Activated B cell treated with CpG ODN at 0.5 μM for 24 hours (primary cell): ENCODE measurements at regions of chr15 and their contacts with region 1.

Region 1: DNA sequence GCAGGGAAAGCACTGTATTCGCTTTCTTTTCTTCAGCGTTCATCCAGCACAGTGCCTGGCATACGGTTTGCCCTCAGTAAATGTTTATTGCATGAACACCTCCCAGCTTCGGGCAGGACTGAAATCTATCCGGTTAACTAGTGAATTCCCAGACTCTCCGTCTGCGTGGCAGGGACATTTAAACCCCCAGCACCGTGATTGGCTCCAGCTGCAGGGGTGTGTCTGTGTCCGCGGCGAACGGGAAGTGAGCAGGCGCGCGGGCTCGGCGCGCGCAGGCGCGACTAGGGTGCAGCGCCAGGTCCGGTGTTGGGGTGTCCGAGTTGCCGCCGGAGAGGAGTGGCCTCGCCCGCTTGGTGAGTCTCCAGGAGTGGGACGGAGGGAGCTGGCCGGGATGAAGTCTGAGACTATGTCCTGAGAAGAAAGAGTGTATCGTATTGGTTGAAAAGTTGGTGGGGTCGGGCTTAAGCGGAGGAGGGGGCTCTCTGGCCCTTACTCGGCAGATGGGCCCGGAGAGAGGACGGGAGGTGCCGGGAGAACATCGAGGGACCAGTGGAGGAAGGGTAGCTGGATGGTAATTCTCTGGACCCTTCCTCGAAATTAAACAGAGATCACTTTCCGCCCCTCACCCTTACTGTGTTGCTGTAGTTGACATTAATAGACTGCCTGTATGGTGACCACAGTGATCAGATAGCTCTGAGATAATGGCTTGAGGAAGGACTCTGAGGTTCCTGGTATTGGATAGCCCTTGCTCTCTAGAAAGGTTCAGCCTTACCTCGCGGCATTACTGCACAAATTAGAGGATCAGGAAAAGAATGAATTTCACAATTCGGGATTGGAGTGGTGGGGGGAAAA is at the start of gene SNAP23:
- DNase-seq: peak; percentile 78
- ATAC-seq: peak; percentile 86
- H3K4me3 Mint-ChIP-seq: peak within 1 kb of the TSS; percentile 100
- H3K27ac Mint-ChIP-seq: peak within 1 kb of the TSS; percentile 97
- H3K4me1 Mint-ChIP-seq: peaks cover 83% of the 10 kb centered on the region
- H3K27me3 Mint-ChIP-seq: no peaks in the 10 kb centered on the region
- CTCF ChIP-seq: no peak
- total RNA-seq, gene SNAP23: 111 and 123 TPM in 2 replicates

Region 2: GRCh38 chr15:41972253-41973242 is 523.0 kb before region 1 on chr15 and contains the start of gene EHD4:
- CTCF ChIA-PET with region 1: no interaction called
- POLR2A ChIA-PET with region 1: no interaction called
- intact Hi-C with region 1: loop called (anchors 5 kb)
- DNase-seq: peak; percentile 88
- ATAC-seq: peak; percentile 84
- H3K4me3 Mint-ChIP-seq: peak within 1 kb of the TSS; percentile 93
- H3K27ac Mint-ChIP-seq: peak within 1 kb of the TSS; percentile 90
- H3K4me1 Mint-ChIP-seq: peaks cover 46% of the 10 kb centered on the region
- H3K27me3 Mint-ChIP-seq: peaks cover 7% of the 10 kb centered on the region
- CTCF ChIP-seq: no peak
- total RNA-seq, gene EHD4: 38.4 and 42.6 TPM in 2 replicates

Region 3: GRCh38 chr15:42444415-42445063 is 51.0 kb before region 1 on chr15:
- CTCF ChIA-PET with region 1: no interaction called
- POLR2A ChIA-PET with region 1: no interaction called
- intact Hi-C with region 1: no loop called
- DNase-seq: no peak
- ATAC-seq: no peak
- H3K4me3 Mint-ChIP-seq: no peak overlapping the region
- H3K27ac Mint-ChIP-seq: no peak overlapping the region
- H3K4me1 Mint-ChIP-seq: no peaks in the 10 kb centered on the region
- H3K27me3 Mint-ChIP-seq: no peaks in the 10 kb centered on the region
- CTCF ChIP-seq: no peak

Region 4: GRCh38 chr15:42474827-42475226 is 20.8 kb before region 1 on chr15:
- CTCF ChIA-PET with region 1: interaction called, 9 read pairs
- POLR2A ChIA-PET with region 1: interaction called, 6 read pairs
- intact Hi-C with region 1: loop called (anchors 2 kb)
- DNase-seq: no peak
- ATAC-seq: no peak
- H3K4me3 Mint-ChIP-seq: no peak overlapping the region
- H3K27ac Mint-ChIP-seq: peak overlapping the region; percentile 59
- H3K4me1 Mint-ChIP-seq: peaks cover 25% of the 10 kb centered on the region
- H3K27me3 Mint-ChIP-seq: no peaks in the 10 kb centered on the region
- CTCF ChIP-seq: no peak

Region 5: DNA sequence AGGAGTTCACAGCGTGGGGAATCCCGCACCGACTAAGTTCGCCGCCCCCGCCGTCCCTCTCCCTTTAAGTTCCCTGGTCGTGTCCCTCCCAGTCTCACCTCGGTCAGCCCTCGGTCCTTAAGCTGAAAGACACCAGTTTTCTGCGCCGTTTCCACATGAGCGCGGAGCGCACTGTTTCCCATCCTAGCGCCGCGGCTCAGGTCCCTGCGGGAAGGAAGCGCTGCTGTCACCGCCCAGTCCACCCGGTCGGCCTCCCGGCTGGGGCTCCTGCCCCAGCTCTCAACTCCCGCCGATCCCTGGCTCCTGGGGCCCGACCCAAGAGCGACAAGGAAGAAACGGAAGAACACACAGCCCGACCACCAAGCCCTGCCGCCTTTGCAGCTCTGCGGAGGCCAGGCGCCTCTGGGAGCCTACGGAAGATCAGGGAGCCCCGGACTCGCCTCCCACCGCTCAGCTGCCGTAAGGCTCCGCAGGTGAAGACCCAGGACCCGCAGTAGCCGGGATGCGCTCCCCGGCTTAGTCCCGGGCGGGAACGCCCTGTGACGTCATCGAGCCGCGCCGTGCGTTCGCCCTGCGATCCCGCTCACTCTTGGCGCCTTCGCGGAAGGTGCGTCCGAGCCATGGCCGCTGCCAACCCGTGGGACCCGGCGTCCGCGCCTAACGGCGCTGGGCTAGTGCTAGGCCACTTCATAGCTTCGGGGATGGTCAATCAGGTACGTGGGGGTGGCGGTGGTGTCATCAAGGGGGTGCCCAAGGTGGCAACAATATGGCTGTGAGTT is 52.9 kb after region 1 on chr15 and contains the starts of genes HAUS2 and LRRC57:
- CTCF ChIA-PET with region 1: no interaction called
- POLR2A ChIA-PET with region 1: interaction called, 16 read pairs
- intact Hi-C with region 1: loop called (anchors 1 kb)
- DNase-seq: peak; percentile 88
- ATAC-seq: peak; percentile 86
- H3K4me3 Mint-ChIP-seq: peak within 1 kb of the TSS; percentile 96
- H3K27ac Mint-ChIP-seq: peak within 1 kb of the TSS; percentile 93
- H3K4me1 Mint-ChIP-seq: peaks cover 36% of the 10 kb centered on the region
- H3K27me3 Mint-ChIP-seq: no peaks in the 10 kb centered on the region
- CTCF ChIP-seq: no peak
- total RNA-seq, gene HAUS2: 18.2 and 20.8 TPM in 2 replicates
- total RNA-seq, gene LRRC57: 16.1 and 21.4 TPM in 2 replicates

Region 6: DNA sequence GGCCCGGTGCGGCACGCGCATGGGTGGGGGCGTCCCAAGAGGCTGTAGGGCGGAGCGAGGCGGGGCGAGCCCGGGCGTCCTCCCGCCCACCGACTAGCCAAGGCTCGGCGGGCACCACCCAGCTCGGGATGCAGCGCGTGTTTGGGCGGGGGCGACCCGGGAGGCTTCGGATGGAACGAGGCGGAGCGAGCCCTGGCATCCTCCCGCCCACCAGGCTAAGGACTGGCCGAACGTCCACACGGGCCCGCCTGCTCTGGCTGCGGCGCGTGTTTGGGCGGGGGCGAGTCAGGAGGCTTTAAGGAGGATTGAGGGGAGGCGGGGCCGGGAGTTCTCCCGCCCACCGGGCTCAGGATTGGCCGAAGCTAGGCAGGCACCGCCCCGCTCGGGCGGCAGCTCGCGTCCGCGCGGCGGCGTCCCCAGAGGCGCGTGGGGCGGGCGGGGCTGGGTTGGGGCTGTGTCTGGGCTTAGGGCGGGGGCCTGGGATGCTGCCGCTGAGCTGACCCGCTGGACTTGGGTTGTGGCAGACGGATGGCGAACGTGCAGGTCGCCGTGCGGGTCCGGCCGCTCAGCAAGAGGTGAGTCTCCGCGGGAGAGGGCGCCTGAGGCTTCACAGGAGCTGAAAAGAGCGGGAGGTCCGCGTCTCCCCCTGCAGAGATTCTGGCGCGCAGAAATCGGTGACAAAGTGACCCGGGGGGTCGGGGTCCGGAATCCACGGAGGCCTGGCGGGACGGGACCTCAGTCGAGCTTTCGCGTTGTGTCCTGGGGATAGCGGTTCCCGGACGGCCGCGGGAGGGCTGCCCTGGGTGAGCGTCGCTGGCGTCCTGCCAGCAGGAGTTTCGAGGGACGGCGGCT is 79.8 kb after region 1 on chr15 and contains the start of gene STARD9:
- CTCF ChIA-PET with region 1: no interaction called
- POLR2A ChIA-PET with region 1: interaction called, 12 read pairs
- intact Hi-C with region 1: loop called (anchors 2 kb)
- DNase-seq: peak; percentile 98
- ATAC-seq: peak; percentile 85
- H3K4me3 Mint-ChIP-seq: peak within 1 kb of the TSS; percentile 96
- H3K27ac Mint-ChIP-seq: peak within 1 kb of the TSS; percentile 83
- H3K4me1 Mint-ChIP-seq: peaks cover 21% of the 10 kb centered on the region
- H3K27me3 Mint-ChIP-seq: no peaks in the 10 kb centered on the region
- CTCF ChIP-seq: no peak
- total RNA-seq, gene STARD9: 5.5 and 7.1 TPM in 2 replicates

Region 7: GRCh38 chr15:42920519-42921227 is 425.1 kb after region 1 on chr15 and contains the start of gene TTBK2:
- CTCF ChIA-PET with region 1: no interaction called
- POLR2A ChIA-PET with region 1: no interaction called
- intact Hi-C with region 1: loop called (anchors 10 kb)
- DNase-seq: peak; percentile 88
- ATAC-seq: peak; percentile 94
- H3K4me3 Mint-ChIP-seq: peak within 1 kb of the TSS; percentile 98
- H3K27ac Mint-ChIP-seq: peak within 1 kb of the TSS; percentile 91
- H3K4me1 Mint-ChIP-seq: peaks cover 34% of the 10 kb centered on the region
- H3K27me3 Mint-ChIP-seq: no peaks in the 10 kb centered on the region
- CTCF ChIP-seq: no peak
- total RNA-seq, gene TTBK2: 16.2 and 19.8 TPM in 2 replicates

Region 8: DNA sequence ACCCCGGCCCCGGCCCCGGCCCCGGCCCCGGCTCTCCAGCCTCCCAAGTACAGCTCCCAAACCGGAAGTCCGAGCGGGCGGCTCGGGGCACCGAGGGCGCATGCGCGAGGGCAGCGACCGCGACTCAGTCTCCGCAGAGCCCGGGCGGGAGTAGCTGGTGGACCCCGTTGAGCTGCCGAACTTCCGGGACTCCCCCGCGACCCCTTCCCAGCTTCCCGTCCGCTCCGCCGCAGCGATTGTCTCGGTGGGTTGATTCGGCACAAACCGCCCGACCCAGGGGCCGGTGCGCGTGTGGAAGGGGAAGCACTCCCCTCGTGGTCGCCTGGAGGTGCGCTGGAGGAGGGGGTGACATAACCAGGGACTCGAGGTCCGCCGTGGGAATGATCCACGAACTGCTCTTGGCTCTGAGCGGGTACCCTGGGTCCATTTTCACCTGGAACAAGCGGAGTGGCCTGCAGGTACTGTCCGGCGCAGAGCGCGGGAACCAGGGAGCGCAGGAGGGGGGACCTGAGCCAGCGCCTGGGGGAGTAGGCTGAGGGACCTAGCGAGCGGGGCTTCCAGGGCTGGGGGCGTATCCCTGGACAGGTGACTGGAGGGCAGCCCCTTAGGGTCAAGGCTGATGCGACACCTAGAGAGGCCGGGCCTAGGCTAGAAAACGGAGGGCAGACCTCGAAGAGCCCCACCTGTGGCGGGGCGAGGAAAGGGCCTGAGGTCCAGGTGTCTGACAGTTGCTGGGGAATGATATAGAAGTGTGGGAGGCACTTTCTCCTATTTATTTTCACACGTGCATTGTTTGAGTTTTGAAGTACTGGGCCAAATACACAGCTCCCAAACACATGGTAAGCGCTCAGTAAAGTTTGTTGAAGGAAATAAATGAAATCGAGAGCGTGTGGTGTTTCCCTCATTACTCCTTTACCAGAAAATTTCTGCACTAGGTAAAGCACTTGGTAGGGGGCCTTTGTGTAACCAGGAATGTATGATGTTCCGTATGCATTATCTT is 875.7 kb after region 1 on chr15 and contains the starts of genes TUBGCP4 and ZSCAN29:
- CTCF ChIA-PET with region 1: no interaction called
- POLR2A ChIA-PET with region 1: no interaction called
- intact Hi-C with region 1: loop called (anchors 10 kb)
- DNase-seq: peak; percentile 83
- ATAC-seq: peak; percentile 82
- H3K4me3 Mint-ChIP-seq: peak within 1 kb of the TSS; percentile 93
- H3K27ac Mint-ChIP-seq: peak within 1 kb of the TSS; percentile 87
- H3K4me1 Mint-ChIP-seq: peaks cover 58% of the 10 kb centered on the region
- H3K27me3 Mint-ChIP-seq: no peaks in the 10 kb centered on the region
- CTCF ChIP-seq: no peak
- total RNA-seq, gene TUBGCP4: 24.0 and 31.2 TPM in 2 replicates
- total RNA-seq, gene ZSCAN29: 45.6 and 50.6 TPM in 2 replicates